ENCODE measurements at regions of chr11 and their contacts with region 1.

Region 1: DNA sequence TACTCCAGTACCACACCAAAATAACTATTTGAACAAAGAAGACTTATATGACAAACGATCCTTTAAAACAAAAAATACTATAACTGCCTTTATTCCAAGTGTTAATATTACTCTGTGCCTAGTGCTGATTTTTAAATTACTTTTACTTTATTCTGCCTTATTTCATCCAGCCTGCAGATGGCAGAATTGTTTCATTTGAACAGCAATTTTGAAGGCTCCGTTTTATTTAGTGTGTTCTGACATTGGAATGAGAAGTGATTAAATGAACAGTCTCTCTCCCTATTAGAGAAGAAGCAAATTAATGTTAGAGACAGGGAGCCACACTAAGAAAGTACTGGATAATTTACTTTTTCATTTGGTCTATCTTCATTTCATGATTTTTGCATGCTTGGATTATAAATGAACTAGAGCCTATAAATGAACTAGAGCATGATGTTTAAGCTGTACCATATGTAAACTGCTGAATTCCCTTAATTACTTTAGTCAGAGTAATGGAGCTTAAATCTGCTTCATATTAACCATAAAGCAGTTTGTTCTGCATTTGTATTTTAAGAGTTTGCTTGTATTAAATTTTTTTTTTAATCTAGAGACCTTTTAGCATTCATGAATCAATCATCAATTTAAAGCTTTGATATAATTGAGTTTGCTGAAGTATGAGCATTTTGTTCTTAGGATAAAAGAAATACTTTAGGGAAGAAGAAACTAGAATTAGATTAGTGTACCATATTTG is 9.8 kb downstream of the PDHX start:
- DNase-seq: no peak
- ATAC-seq: peak; percentile 76
- H3K4me3 ChIP-seq: no peak overlapping the region
- H3K27ac ChIP-seq: no peak overlapping the region
- H3K4me1 ChIP-seq: 0 out of 2 replicates have a peak, but pooled peaks cover 2% of the 10 kb centered on the region
- H3K27me3 ChIP-seq: no peaks in the 10 kb centered on the region
- CTCF ChIP-seq: peak; percentile 52 to 70 (median 59); a peak in 5 of 6 replicates
- EP300 ChIP-seq: no peak
- POLR2A ChIP-seq: no peak
- RAD21 ChIP-seq: peak; percentile 97

Region 2: GRCh38 chr11:34916015-34916842 is 10.0 kb before region 1 on chr11 and contains the starts of genes APIP and PDHX:
- CTCF ChIA-PET with region 1: interaction called, 17 read pairs
- POLR2A ChIA-PET with region 1: no interaction called
- RAD21 ChIA-PET with region 1: interaction called, 4 read pairs
- SMC1A ChIA-PET with region 1: interaction called, 10 read pairs
- in situ Hi-C with region 1: no loop called
- intact Hi-C with region 1: no loop called
- DNase-seq: peak; percentile 92
- ATAC-seq: peak; percentile 96
- H3K4me3 ChIP-seq: peak within 1 kb of the TSS; percentile 99
- H3K27ac ChIP-seq: peak within 1 kb of the TSS; percentile 83
- H3K4me1 ChIP-seq: no peaks in the 10 kb centered on the region
- H3K27me3 ChIP-seq: no peaks in the 10 kb centered on the region
- CTCF ChIP-seq: no peak
- EP300 ChIP-seq: no peak
- POLR2A ChIP-seq: peak; percentile 99
- RAD21 ChIP-seq: no peak
- polyA plus RNA-seq, gene APIP: 85.4 to 87.1 TPM
- polyA plus RNA-seq, gene PDHX: 21.9 to 24.5 TPM

Region 3: GRCh38 chr11:34988294-34989255 is 62.3 kb after region 1 on chr11:
- CTCF ChIA-PET with region 1: interaction called, 12 read pairs
- POLR2A ChIA-PET with region 1: interaction called, 4 read pairs
- RAD21 ChIA-PET with region 1: interaction called, 3 read pairs
- SMC1A ChIA-PET with region 1: interaction called, 6 read pairs
- in situ Hi-C with region 1: no loop called
- intact Hi-C with region 1: no loop called
- DNase-seq: no peak
- ATAC-seq: peak; percentile 85
- H3K4me3 ChIP-seq: no peak overlapping the region
- H3K27ac ChIP-seq: no peak overlapping the region
- H3K4me1 ChIP-seq: peaks cover 6% of the 10 kb centered on the region
- H3K27me3 ChIP-seq: no peaks in the 10 kb centered on the region
- CTCF ChIP-seq: no peak
- EP300 ChIP-seq: no peak
- POLR2A ChIP-seq: no peak
- RAD21 ChIP-seq: no peak

Region 4: DNA sequence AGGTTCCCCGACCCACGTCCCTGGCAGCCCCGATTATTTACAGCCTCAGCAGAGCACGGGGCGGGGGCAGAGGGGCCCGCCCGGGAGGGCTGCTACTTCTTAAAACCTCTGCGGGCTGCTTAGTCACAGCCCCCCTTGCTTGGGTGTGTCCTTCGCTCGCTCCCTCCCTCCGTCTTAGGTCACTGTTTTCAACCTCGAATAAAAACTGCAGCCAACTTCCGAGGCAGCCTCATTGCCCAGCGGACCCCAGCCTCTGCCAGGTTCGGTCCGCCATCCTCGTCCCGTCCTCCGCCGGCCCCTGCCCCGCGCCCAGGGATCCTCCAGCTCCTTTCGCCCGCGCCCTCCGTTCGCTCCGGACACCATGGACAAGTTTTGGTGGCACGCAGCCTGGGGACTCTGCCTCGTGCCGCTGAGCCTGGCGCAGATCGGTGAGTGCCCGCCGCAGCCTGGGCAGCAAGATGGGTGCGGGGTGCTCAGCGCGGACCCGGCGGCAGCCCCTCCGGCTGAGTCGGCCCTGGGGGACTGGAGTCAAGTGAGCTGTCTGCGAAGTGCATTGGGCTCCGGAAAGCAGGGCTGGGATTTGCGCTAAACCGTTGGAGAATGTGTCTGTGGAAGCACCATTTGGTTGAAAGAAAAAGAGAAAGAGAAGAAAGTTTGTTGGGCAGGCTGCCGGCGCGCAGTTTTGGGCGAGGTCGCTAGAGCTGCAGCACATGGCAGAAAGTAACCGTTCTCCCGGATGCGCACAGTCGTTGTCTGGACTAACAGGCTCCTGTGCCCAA is 212.9 kb after region 1 on chr11 and contains the start of gene CD44:
- CTCF ChIA-PET with region 1: interaction called, 5 read pairs
- POLR2A ChIA-PET with region 1: no interaction called
- RAD21 ChIA-PET with region 1: interaction called, 6 read pairs
- SMC1A ChIA-PET with region 1: interaction called, 17 read pairs
- in situ Hi-C with region 1: no loop called
- intact Hi-C with region 1: loop called (anchors 5 kb)
- DNase-seq: no peak
- ATAC-seq: peak; percentile 54
- H3K4me3 ChIP-seq: peak within 1 kb of the TSS; percentile 88
- H3K27ac ChIP-seq: peak within 1 kb of the TSS; percentile 68
- H3K4me1 ChIP-seq: peaks cover 34% of the 10 kb centered on the region
- H3K27me3 ChIP-seq: no peaks in the 10 kb centered on the region
- CTCF ChIP-seq: no peak
- EP300 ChIP-seq: no peak
- POLR2A ChIP-seq: peak; percentile 99
- RAD21 ChIP-seq: no peak
- polyA plus RNA-seq, gene CD44: 57.1 to 65.3 TPM

Region 5: DNA sequence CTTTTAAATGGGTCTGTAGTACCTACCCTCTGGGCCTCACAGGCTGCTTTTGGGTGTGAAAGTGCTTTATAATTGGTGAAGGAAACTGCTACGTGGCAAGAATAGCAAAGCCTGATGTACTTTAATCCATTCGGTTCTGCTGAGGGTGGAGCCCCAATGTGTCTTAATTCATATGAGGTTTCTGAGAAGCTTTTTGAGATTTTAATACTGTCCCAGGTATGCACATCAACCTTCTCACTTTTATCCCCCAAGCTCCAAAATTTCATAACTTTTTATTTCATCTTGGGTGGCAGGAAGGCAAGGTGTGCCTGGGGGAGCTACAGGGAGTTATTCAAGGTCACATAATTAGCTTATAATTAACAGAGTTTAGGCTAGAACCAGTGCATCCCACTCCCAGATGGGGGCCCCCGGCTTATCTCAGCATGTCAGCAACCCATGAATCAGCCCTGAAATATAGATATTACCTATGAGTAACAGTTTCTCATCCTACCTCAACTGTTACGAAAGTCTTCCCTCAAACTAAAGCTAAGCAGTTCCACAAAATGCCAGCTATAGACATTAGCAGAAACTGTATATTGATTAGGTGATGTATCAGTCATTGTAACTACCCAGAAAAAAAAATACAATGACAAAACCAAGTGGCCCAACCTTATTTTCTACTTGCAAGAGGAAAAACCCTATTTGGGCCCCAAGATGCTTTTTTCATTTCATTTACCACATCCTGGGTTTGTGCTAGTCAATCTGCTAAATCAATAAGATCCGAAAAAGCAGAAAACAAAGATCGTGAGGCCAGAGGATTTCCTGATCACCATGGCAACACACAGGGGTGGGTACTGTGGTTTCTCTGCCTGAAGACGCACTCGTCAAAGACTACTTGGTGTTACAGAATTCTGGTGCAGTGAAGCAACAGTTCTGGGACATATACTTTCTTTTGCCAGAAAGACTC is 239.4 kb after region 1 on chr11:
- CTCF ChIA-PET with region 1: interaction called, 26 read pairs
- POLR2A ChIA-PET with region 1: no interaction called
- RAD21 ChIA-PET with region 1: interaction called, 6 read pairs
- SMC1A ChIA-PET with region 1: interaction called, 10 read pairs
- in situ Hi-C with region 1: no loop called
- intact Hi-C with region 1: loop called (anchors 2 kb)
- DNase-seq: peak; percentile 99
- ATAC-seq: peak; percentile 85
- H3K4me3 ChIP-seq: peak overlapping the region; percentile 53
- H3K27ac ChIP-seq: peak overlapping the region; percentile 72
- H3K4me1 ChIP-seq: peaks cover 54% of the 10 kb centered on the region
- H3K27me3 ChIP-seq: no peaks in the 10 kb centered on the region
- CTCF ChIP-seq: no peak
- EP300 ChIP-seq: peak; percentile 60 to 86; a peak in 3 of 4 replicates
- POLR2A ChIP-seq: peak; percentile 41; the same call in 1 of the 2 replicates
- RAD21 ChIP-seq: no peak

Region 6: GRCh38 chr11:35257281-35257680 is 331.0 kb after region 1 on chr11:
- CTCF ChIA-PET with region 1: interaction called, 3 read pairs
- POLR2A ChIA-PET with region 1: no interaction called
- RAD21 ChIA-PET with region 1: no interaction called
- SMC1A ChIA-PET with region 1: interaction called, 10 read pairs
- in situ Hi-C with region 1: no loop called
- intact Hi-C with region 1: no loop called
- DNase-seq: peak; percentile 55
- ATAC-seq: peak; percentile 100
- H3K4me3 ChIP-seq: 0 out of 2 replicates have a peak overlapping the region, but pooled peaks have one; percentile 39
- H3K27ac ChIP-seq: no peak overlapping the region
- H3K4me1 ChIP-seq: peaks cover 11% of the 10 kb centered on the region
- H3K27me3 ChIP-seq: no peaks in the 10 kb centered on the region
- CTCF ChIP-seq: no peak
- EP300 ChIP-seq: no peak
- POLR2A ChIP-seq: no peak
- RAD21 ChIP-seq: no peak

Region 7: GRCh38 chr11:35485656-35486322 is 559.5 kb after region 1 on chr11:
- CTCF ChIA-PET with region 1: interaction called, 10 read pairs
- POLR2A ChIA-PET with region 1: interaction called, 3 read pairs
- RAD21 ChIA-PET with region 1: interaction called, 4 read pairs
- SMC1A ChIA-PET with region 1: interaction called, 9 read pairs
- in situ Hi-C with region 1: no loop called
- intact Hi-C with region 1: loop called (anchors 5 kb)
- DNase-seq: peak; percentile 7
- ATAC-seq: peak; percentile 100
- H3K4me3 ChIP-seq: no peak overlapping the region
- H3K27ac ChIP-seq: no peak overlapping the region
- H3K4me1 ChIP-seq: no peaks in the 10 kb centered on the region
- H3K27me3 ChIP-seq: no peaks in the 10 kb centered on the region; a peak in 1 of 4 replicates
- CTCF ChIP-seq: peak; percentile 82 to 92 (median 92)
- EP300 ChIP-seq: no peak
- POLR2A ChIP-seq: no peak
- RAD21 ChIP-seq: peak; percentile 66

Measured in GM12878 (cell line).